PC-3 (cell line): ENCODE measurements at regions of chr2 and their contacts with region 1.

Region 1: DNA sequence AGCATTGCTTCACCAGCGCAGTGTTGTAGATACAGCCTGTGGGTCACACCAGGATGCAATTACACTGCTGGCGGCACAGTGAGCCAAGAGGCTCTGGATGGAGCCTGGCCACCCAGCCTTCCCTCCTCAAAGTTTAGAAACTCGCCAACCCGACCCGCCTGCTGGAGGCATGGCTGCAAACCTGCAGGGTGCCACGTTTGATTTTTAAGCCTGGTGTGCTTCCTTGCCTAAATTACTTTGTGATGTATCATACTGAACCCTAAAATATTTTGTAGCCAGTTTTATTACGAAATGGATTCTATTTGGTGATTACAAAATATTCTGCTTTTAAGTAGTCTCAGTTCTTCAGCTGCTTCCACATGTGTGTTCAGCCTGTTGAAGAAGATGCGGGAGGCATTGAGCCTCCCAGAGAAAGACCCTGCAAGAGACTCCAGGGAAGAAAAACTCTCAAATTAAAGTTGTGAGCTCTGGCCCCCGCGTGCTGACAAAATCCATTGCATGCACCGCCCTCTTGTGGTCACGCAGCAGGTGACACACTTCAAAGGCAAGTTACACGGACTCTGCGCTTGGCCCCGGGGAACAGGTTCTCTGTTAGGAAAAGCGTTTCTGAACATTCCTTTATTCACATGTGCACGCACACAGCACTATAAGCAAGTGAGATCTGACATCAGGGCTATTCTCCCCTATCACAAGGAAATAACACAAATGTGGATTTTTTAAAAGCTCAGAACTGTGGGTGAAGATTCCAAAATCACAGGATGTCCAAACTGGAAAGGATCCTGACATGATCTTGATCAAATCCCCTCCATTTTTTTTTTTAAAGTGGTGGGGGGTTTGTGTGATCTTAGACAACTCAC is 63.0 kb upstream of the TWIST2 start:
- DNase-seq: peak; percentile 69
- ATAC-seq: peak; percentile 89
- H3K4me3 ChIP-seq: no peak overlapping the region
- H3K27ac ChIP-seq: no peak overlapping the region
- H3K4me1 ChIP-seq: no peaks in the 10 kb centered on the region
- H3K27me3 ChIP-seq: no peaks in the 10 kb centered on the region
- CTCF ChIP-seq: peak; percentile 92

Region 2: DNA sequence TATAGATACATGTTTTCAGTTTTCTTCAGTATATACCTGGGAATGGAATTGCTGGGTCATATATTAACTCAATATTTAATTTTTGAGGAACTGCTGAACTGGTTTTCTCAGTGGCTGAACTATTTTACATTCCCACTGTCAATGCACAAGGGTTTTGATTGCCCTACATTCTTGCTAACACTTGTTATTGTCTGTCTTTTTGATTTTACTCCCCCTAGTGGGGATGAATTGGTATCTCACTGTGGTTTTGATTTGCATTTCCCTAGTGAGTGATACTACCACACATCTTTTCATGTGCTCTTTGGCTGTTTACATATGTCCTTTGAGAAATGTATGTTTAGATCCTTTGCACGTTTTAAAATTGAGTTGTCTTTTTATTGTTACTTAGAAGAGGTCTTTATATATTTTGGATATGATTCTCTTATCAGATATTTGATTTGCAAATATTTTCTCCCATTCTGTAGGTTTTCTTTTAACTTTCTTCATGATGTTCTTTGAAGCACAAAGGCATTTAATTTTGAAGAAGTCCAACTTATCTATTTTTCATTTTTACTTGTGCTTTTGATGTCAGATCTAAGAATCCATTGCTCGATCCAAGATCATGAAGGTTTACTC is 322.0 kb before region 1 on chr2:
- CTCF ChIA-PET with region 1: interaction called, 3 read pairs
- POLR2A ChIA-PET with region 1: no interaction called
- intact Hi-C with region 1: loop called (anchors 5 kb)
- DNase-seq: peak; percentile 73
- ATAC-seq: peak; percentile 72
- H3K4me3 ChIP-seq: no peak overlapping the region
- H3K27ac ChIP-seq: no peak overlapping the region
- H3K4me1 ChIP-seq: peaks cover 19% of the 10 kb centered on the region
- H3K27me3 ChIP-seq: no peaks in the 10 kb centered on the region
- CTCF ChIP-seq: peak; percentile 80

Region 3: GRCh38 chr2:238561227-238561626 is 223.7 kb before region 1 on chr2:
- CTCF ChIA-PET with region 1: no interaction called
- POLR2A ChIA-PET with region 1: no interaction called
- intact Hi-C with region 1: loop called (anchors 1 kb)
- DNase-seq: peak; percentile 80
- ATAC-seq: peak; percentile 89
- H3K4me3 ChIP-seq: no peak overlapping the region
- H3K27ac ChIP-seq: peak overlapping the region; percentile 62
- H3K4me1 ChIP-seq: peaks cover 18% of the 10 kb centered on the region
- H3K27me3 ChIP-seq: no peaks in the 10 kb centered on the region
- CTCF ChIP-seq: no peak

Region 4: GRCh38 chr2:238761868-238762267 is 23.0 kb before region 1 on chr2:
- CTCF ChIA-PET with region 1: no interaction called
- POLR2A ChIA-PET with region 1: no interaction called
- intact Hi-C with region 1: no loop called
- DNase-seq: peak; percentile 28
- ATAC-seq: no peak
- H3K4me3 ChIP-seq: no peak overlapping the region
- H3K27ac ChIP-seq: no peak overlapping the region
- H3K4me1 ChIP-seq: no peaks in the 10 kb centered on the region
- H3K27me3 ChIP-seq: peaks cover 34% of the 10 kb centered on the region
- CTCF ChIP-seq: no peak

Region 5: DNA sequence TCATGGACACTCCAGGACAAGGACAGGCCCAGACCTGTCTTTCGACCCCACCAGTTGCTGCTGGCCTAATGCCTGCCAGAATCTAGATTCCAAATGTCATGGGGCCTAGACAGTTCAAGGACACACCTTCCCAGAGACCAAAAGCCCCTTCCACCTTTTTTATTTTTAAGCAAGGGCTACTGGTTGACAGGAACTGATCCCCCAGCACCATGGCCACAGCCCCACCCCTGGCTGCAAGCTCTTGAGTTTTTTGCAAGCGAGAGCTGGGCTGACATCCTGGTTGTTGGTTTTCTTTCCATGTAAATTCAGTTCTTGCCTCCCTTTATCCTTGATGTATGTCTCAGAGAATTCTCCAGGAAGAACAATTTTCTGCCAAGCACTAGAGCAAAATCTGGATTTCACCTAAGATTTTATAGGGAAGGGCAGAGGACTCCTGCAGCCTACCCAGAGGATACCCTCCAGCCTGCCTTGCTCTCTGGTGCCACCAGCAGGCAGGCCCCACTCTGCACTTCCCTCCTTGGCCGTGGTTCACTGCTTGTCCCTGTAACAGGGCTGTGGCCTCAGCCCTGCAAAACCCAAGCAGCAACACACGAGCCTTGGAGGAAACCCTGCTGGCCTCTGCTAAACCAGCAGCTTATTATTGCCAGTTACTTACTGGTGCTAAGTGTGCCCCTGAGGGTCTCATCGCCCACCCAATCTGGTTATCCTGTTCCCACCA is 160.7 kb after region 1 on chr2:
- CTCF ChIA-PET with region 1: no interaction called
- POLR2A ChIA-PET with region 1: no interaction called
- intact Hi-C with region 1: loop called (anchors 10 kb)
- DNase-seq: peak; percentile 45
- ATAC-seq: no peak
- H3K4me3 ChIP-seq: no peak overlapping the region
- H3K27ac ChIP-seq: no peak overlapping the region
- H3K4me1 ChIP-seq: peaks cover 50% of the 10 kb centered on the region
- H3K27me3 ChIP-seq: no peaks in the 10 kb centered on the region
- CTCF ChIP-seq: peak; percentile 61